ENCODE measurements at regions of chr21 and their contacts with region 1.

Region 1: GRCh38 chr21:33522953-33523349 is 19.0 kb downstream of the GART start:
- DNase-seq: no peak

Region 2: GRCh38 chr21:31744182-31744800 is 1778.7 kb before region 1 on chr21:
- intact Hi-C with region 1: no loop called
- DNase-seq: no peak

Region 3: GRCh38 chr21:33487996-33488395 is 35.0 kb before region 1 on chr21:
- intact Hi-C with region 1: loop called in 1 of 2 experiments (anchors 5 kb)
- DNase-seq: no peak

Region 4: GRCh38 chr21:33721081-33721480 is 198.1 kb after region 1 on chr21:
- intact Hi-C with region 1: no loop called
- DNase-seq: no peak